CD8-positive, alpha-beta memory T cell (primary cell): ENCODE measurements at regions of chr2 and their contacts with region 1.

Region 1: GRCh38 chr2:25951071-25951547 is 31.2 kb downstream of the KIF3C start:
- DNase-seq: peak; percentile 48 to 78 (median 57)
- H3K4me3 ChIP-seq: no peak overlapping the region
- H3K4me3 Mint-ChIP-seq: no peak overlapping the region
- H3K27ac ChIP-seq: no peak overlapping the region
- H3K27ac Mint-ChIP-seq: no peak overlapping the region
- H3K4me1 ChIP-seq: no peaks in the 10 kb centered on the region
- H3K4me1 Mint-ChIP-seq: peaks cover 0 to 6% (median 3%) of the 10 kb centered on the region in 3 donors
- H3K27me3 ChIP-seq: no peaks in the 10 kb centered on the region
- H3K27me3 Mint-ChIP-seq: no peaks in the 10 kb centered on the region

Region 2: DNA sequence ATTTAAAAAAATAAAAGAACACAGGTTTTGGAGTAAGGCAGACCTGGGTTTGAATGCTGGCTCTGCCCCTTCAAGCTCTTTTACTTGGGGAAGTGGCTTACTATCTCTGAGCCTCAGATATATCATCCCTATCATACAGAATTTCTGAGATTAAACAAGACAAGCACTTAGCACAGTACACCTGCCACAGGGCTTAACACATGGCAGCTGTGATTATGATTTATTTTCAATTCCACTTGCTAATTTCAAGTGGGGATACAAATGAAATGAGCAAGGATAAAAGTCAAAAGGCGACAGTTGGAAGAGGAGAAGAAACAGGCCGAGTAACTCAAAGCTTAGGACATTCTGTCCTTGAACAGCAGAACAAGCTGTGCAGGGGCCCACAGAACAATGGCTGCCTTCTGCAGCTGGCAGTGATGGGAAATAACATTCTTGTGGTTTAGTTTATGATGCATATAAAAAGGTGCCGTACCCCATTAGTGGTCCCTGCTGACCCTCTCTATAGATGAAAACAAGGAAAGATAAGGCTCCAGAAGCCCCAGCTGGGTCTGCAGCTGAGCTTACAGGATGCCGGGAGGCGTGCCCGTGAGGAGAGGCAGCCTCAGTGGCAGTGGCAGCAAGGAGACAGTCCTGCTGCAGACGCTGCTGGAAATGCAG is 14.1 kb before region 1 on chr2:
- CTCF ChIA-PET with region 1: interaction called, 11 read pairs
- POLR2A ChIA-PET with region 1: interaction called, 4 read pairs
- DNase-seq: no peak
- H3K4me3 ChIP-seq: no peak overlapping the region
- H3K4me3 Mint-ChIP-seq: no peak overlapping the region
- H3K27ac ChIP-seq: no peak overlapping the region
- H3K27ac Mint-ChIP-seq: no peak overlapping the region
- H3K4me1 ChIP-seq: no peaks in the 10 kb centered on the region
- H3K4me1 Mint-ChIP-seq: no peaks in the 10 kb centered on the region
- H3K27me3 ChIP-seq: no peaks in the 10 kb centered on the region
- H3K27me3 Mint-ChIP-seq: no peaks in the 10 kb centered on the region

Region 3: DNA sequence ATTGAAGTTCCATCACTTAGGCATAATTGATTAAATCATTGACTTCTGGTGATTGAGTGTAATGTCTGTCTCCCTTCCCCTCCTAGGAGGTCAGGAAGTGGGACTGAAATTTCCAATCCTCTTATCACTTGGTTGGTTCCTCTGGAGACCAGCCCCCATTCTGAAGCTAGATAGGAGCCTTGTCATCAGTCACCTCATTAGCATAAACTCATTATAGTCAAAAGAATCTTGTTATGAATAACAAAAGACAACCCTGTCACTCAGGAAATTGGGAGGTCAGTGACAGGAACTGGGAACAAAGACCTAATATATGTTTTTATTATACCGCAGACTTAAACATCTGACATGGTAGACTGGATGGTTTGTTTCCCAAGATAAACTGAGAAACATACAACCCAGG is 161.1 kb after region 1 on chr2:
- CTCF ChIA-PET with region 1: no interaction called
- POLR2A ChIA-PET with region 1: no interaction called
- DNase-seq: no peak
- H3K4me3 ChIP-seq: no peak overlapping the region
- H3K4me3 Mint-ChIP-seq: no peak overlapping the region
- H3K27ac ChIP-seq: no peak overlapping the region
- H3K27ac Mint-ChIP-seq: peak overlapping the region in 3 of 8 donors; percentile 11 to 33 (median 32)
- H3K4me1 ChIP-seq: no peaks in the 10 kb centered on the region
- H3K4me1 Mint-ChIP-seq: peaks cover 16 to 43% (median 19%) of the 10 kb centered on the region in 3 donors
- H3K27me3 ChIP-seq: no peaks in the 10 kb centered on the region
- H3K27me3 Mint-ChIP-seq: no peaks in the 10 kb centered on the region

Region 4: DNA sequence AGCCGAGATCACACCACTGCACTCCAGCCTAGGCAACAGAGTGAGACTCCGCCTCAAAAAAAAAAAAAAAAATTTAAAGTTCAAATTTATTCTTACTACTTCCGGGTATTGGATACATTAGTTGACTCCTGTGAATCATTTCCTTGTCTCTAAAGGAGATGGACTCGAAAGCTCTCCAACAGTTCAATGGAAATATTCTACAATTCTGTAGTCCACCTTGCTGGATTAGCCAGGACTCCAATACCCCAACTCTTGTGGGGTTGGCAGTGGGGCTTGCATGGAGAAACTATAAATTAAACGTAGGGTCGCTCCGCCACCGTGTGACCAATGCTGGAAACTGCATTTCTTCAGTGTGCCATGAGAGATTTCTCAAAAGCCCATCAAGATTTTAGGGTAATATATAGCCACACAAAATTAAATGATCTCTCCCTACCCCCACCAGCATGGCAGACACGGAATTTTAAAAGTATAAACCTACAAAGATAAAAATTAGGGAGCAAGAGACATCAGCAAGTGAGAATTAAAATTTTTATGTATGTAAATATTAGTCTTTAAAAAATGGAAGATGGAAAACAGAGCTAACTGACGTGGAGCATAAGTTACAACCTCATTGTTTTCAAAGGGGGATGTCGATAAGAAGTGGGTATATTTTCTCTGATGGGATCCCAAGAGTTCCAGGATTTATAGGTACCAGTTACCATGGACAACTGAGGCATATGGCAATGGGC is 194.0 kb after region 1 on chr2:
- CTCF ChIA-PET with region 1: interaction called, 12 read pairs
- POLR2A ChIA-PET with region 1: no interaction called
- DNase-seq: peak; percentile 27 to 70 (median 42)
- H3K4me3 ChIP-seq: no peak overlapping the region
- H3K4me3 Mint-ChIP-seq: no peak overlapping the region
- H3K27ac ChIP-seq: no peak overlapping the region
- H3K27ac Mint-ChIP-seq: no peak overlapping the region
- H3K4me1 ChIP-seq: no peaks in the 10 kb centered on the region
- H3K4me1 Mint-ChIP-seq: no peaks in the 10 kb centered on the region
- H3K27me3 ChIP-seq: peaks cover under 1% of the 10 kb centered on the region
- H3K27me3 Mint-ChIP-seq: peaks cover 3 to 12% of the 10 kb centered on the region in 2 donors